OCI-LY7 (cell line): ENCODE measurements at regions of chr14 and their contacts with region 1.

Region 1: DNA sequence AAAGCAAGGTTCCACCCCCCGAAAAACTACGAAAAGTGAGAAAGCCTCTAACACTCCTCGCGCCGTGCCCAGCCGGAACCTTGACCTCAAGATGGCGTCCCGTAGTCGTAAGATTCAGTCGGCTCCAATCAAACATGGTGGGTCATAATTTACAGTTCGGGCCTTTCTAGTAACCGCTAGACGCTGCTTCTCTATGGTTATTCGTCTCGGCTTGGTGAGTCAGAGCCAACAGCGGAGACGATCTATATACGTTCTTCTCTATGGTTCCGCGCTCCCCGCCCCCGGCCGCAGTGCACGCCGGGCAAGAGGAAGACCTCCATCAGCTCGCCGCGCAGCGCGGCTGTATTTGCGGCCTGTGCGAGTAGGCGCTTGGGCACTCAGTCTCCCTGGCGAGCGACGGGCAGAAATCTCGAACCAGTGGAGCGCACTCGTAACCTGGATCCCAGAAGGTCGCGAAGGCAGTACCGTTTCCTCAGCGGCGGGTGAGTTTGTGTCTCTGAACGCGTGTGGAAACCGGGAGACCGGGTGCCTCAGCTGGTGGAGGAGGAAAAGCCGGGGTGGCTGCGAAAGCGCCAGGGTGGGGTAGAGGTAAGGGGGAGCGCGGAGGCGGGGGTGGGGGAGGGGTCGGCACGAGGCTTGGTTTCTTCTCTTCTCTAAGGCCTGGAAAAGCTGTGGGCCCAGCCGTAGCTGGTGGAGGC is at the start of gene RBM25:
- DNase-seq: peak; percentile 99
- H3K4me3 ChIP-seq: peak within 1 kb of the TSS; percentile 83
- H3K27ac ChIP-seq: peak within 1 kb of the TSS; percentile 77
- H3K4me1 ChIP-seq: peaks cover 41% of the 10 kb centered on the region
- CTCF ChIP-seq: no peak; the same call in 1 of the 2 replicates
- total RNA-seq, gene RBM25: 60.1 and 70.5 TPM in 2 replicates

Region 2: GRCh38 chr14:73026845-73027542 is 31.4 kb before region 1 on chr14 and contains the start of gene ZFYVE1:
- CTCF ChIA-PET with region 1: no interaction called
- POLR2A ChIA-PET with region 1: interaction called, 18 read pairs
- intact Hi-C with region 1: loop called (anchors 2 kb)
- DNase-seq: peak; percentile 97
- H3K4me3 ChIP-seq: peak within 1 kb of the TSS; percentile 86
- H3K27ac ChIP-seq: no peak within 1 kb of the TSS
- H3K4me1 ChIP-seq: peaks cover 19% of the 10 kb centered on the region
- CTCF ChIP-seq: no peak
- total RNA-seq, gene ZFYVE1: 8.1 and 11.5 TPM in 2 replicates

Region 3: DNA sequence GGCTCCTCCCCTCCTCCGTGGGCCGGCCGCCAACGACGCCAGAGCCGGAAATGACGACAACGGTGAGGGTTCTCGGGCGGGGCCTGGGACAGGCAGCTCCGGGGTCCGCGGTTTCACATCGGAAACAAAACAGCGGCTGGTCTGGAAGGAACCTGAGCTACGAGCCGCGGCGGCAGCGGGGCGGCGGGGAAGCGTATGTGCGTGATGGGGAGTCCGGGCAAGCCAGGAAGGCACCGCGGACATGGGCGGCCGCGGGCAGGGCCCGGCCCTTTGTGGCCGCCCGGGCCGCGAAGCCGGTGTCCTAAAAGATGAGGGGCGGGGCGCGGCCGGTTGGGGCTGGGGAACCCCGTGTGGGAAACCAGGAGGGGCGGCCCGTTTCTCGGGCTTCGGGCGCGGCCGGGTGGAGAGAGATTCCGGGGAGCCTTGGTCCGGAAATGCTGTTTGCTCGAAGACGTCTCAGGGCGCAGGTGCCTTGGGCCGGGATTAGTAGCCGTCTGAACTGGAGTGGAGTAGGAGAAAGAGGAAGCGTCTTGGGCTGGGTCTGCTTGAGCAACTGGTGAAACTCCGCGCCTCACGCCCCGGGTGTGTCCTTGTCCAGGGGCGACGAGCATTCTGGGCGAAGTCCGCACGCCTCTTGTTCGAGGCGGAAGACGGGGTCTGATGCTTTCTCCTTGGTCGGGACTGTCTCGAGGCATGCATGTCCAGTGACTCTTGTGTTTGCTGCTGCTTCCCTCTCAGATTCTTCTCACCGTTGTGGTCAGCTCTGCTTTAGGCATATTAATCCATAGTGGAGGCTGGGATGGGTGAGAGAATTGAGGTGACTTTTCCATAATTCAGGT is 78.2 kb after region 1 on chr14 and contains the start of gene PSEN1:
- CTCF ChIA-PET with region 1: no interaction called
- POLR2A ChIA-PET with region 1: interaction called, 14 read pairs
- intact Hi-C with region 1: no loop called
- DNase-seq: peak; percentile 98
- H3K4me3 ChIP-seq: peak within 1 kb of the TSS; percentile 87
- H3K27ac ChIP-seq: peak within 1 kb of the TSS; percentile 80
- H3K4me1 ChIP-seq: peaks cover 13% of the 10 kb centered on the region
- CTCF ChIP-seq: no peak
- total RNA-seq, gene PSEN1: 16.9 and 28.0 TPM in 2 replicates